Activated naive CD4-positive, alpha-beta T cell treated with anti-CD3 and anti-CD28 coated beads for 36 hours (primary cell): ENCODE measurements at regions of chr10 and their contacts with region 1.

Region 1: GRCh38 chr10:91006001-91006751 is 85.3 kb upstream of the ANKRD1 start:
- DNase-seq: peak; percentile 83
- H3K4me3 Mint-ChIP-seq: no peak overlapping the region
- H3K27ac Mint-ChIP-seq: no peak overlapping the region
- H3K4me1 Mint-ChIP-seq: peaks cover 31% of the 10 kb centered on the region
- H3K27me3 Mint-ChIP-seq: no peaks in the 10 kb centered on the region

Region 2: DNA sequence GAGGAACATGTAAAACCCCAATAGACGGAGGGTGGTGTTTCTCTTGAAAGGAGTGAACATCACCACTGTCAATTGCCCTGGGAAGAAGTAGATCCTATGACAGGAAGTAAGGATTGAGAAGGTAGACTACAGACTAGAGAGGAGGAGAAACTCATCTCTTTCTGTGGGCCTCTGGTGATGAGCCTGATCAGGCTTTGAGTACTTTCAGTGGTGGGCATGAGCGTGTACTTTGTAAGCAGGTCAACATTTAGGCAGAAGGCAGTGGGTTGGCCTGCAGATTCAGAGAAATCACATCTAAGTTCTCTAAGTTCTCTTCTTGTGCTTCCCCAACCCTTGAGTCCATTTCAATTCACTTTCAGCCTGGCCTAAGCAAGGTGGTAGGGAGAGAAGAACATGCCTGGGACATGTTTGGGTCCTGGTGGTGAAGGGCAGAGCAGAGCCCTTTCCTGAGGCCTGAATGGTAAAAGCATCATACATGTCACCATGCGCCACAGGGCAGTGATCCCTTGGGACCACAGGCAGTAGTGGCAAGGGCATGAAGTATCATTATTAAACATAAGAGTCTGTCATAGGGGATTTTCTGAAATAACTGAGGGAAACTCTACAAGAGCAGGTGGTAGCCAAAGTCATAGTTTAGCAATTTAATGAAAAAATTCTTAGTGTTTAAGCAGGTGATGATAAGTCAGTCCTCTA is 28.9 kb before region 1 on chr10:
- CTCF ChIA-PET with region 1: interaction called, 11 read pairs
- intact Hi-C with region 1: no loop called
- DNase-seq: no peak
- H3K4me3 Mint-ChIP-seq: no peak overlapping the region
- H3K27ac Mint-ChIP-seq: peak overlapping the region; percentile 26
- H3K4me1 Mint-ChIP-seq: no peaks in the 10 kb centered on the region
- H3K27me3 Mint-ChIP-seq: peaks cover 2% of the 10 kb centered on the region

Region 3: DNA sequence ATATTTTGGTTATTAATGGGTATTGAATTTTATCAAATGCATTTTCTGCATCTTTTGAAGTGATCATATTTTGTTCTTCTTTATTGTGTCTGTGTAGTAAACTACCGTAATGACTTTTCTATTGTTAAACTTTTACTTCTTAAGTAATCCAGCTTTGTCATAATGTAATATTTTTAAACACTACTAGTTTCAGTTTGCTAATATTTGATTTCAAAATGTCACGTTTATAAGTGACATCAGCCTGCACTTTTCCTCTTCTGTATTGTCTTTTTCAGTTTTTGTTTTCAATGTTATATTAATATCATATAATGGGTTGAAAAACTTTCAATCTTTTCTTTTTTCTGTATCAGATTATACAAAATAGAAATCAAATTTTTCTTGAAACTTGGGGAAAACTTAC is 13.7 kb before region 1 on chr10:
- CTCF ChIA-PET with region 1: no interaction called
- intact Hi-C with region 1: no loop called
- DNase-seq: no peak
- H3K4me3 Mint-ChIP-seq: no peak overlapping the region
- H3K27ac Mint-ChIP-seq: no peak overlapping the region
- H3K4me1 Mint-ChIP-seq: no peaks in the 10 kb centered on the region
- H3K27me3 Mint-ChIP-seq: peaks cover 3% of the 10 kb centered on the region

Region 4: DNA sequence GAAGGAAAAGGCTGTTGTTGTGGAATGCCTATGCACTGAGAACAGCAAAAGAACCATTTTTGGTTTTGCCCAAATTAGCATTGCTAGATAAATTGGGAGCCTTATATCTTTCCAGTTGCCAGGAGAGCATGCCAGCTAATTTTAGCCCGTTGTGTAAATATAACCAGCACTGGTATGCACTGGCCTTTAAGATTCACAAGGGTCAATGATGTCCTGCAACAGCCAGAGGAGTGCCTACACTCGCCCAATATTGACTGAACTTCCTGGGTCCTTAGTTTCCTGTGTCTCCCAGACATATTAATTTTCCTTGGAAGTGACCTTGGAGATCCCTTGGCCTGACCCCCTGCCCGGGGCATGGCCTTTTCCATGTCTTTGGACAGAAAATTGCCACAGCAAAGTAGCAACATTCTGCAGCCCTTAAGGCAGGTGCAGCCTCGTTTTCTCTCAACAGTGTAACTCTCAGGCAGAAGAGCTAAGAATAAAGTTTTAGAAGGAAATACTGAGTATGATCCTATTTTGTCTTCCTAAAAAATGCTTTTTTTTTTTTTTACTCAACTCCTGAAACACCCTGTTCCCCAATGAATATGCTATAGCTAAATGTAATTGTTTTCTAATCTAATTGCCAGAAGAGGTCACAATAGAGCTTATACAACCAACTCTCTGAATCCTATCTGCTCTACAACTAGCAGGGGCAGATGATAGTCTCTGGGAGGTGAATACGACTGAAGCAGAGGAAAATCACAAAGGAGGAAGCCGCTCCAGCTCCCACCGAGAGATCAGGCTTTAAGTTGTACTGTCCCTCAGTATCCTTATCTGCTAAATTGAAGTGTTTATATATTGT is 82.3 kb after region 1 on chr10:
- CTCF ChIA-PET with region 1: interaction called, 16 read pairs
- intact Hi-C with region 1: loop called (anchors 1 kb)
- DNase-seq: no peak
- H3K4me3 Mint-ChIP-seq: no peak overlapping the region
- H3K27ac Mint-ChIP-seq: no peak overlapping the region
- H3K4me1 Mint-ChIP-seq: no peaks in the 10 kb centered on the region
- H3K27me3 Mint-ChIP-seq: no peaks in the 10 kb centered on the region

Region 5: GRCh38 chr10:91238191-91238590 is 232.0 kb after region 1 on chr10:
- CTCF ChIA-PET with region 1: interaction called, 13 read pairs
- intact Hi-C with region 1: no loop called
- DNase-seq: no peak
- H3K4me3 Mint-ChIP-seq: no peak overlapping the region
- H3K27ac Mint-ChIP-seq: no peak overlapping the region
- H3K4me1 Mint-ChIP-seq: peaks cover 18% of the 10 kb centered on the region
- H3K27me3 Mint-ChIP-seq: no peaks in the 10 kb centered on the region

Region 6: DNA sequence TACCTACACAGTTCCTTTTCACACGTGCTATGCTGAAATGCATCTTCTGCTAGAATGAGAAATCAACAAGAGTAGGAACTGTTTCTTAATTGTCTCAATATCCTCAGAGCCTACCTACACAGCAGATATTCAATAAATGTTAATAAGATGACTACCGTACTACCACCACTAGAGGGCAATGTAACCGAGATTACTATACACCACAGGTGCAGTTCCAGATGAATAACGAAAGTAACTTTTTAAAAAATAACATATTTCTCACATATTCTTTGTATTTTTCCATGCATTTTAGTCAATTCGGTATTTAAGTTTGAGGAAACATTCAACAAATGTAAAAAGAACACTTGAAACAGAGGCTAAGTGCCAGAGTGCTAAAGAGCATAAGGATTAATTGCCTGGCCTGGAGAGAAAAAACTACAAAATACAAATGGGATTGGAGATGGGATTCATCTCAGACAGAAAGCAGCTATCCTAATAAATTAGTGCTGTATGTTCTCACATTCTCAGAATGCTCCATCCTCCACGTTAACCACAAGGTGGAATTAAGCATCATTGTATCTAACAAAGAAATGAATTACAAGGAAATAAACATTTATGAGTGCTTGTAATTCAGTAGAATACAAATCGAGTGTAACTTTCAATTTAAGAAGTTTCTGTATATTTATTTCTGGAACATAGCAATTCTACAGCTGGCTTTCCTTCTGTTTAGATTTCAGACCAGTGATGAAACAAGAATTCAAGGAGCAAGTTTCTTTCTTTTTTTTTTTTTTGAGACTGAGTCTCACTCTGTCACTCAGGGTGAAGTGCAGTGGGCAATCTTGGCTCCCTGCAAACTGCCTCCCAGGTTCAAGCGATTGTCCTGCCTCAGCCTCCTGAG is 383.7 kb after region 1 on chr10:
- CTCF ChIA-PET with region 1: no interaction called
- intact Hi-C with region 1: loop called (anchors 1 kb)
- DNase-seq: no peak
- H3K4me3 Mint-ChIP-seq: no peak overlapping the region
- H3K27ac Mint-ChIP-seq: no peak overlapping the region
- H3K4me1 Mint-ChIP-seq: peaks cover 4% of the 10 kb centered on the region
- H3K27me3 Mint-ChIP-seq: peaks cover 12% of the 10 kb centered on the region